SK-N-SH (cell line): ENCODE measurements at regions of chr3 and their contacts with region 1.

Region 1: GRCh38 chr3:140420621-140421357 is 257.1 kb upstream of the TRIM42 start:
- DNase-seq: no peak
- H3K4me3 ChIP-seq: no peak overlapping the region
- H3K27ac ChIP-seq: no peak overlapping the region
- H3K4me1 ChIP-seq: peaks cover 0 to 8% of the 10 kb centered on the region in 2 experiments; a peak in 2 of 4 replicates
- H3K27me3 ChIP-seq: no peaks in the 10 kb centered on the region
- CTCF ChIP-seq: no peak
- EP300 ChIP-seq: no peak
- RAD21 ChIP-seq: no peak

Region 2: GRCh38 chr3:140103166-140103565 is 317.6 kb before region 1 on chr3:
- CTCF ChIA-PET with region 1: no interaction called
- POLR2A ChIA-PET with region 1: no interaction called
- DNase-seq: no peak
- H3K4me3 ChIP-seq: no peak overlapping the region
- H3K27ac ChIP-seq: no peak overlapping the region
- H3K4me1 ChIP-seq: no peaks in the 10 kb centered on the region; a peak in 1 of 4 replicates
- H3K27me3 ChIP-seq: no peaks in the 10 kb centered on the region
- CTCF ChIP-seq: no peak
- EP300 ChIP-seq: no peak
- RAD21 ChIP-seq: no peak

Region 3: GRCh38 chr3:140432229-140432669 is 11.5 kb after region 1 on chr3:
- CTCF ChIA-PET with region 1: interaction called, 13 read pairs
- POLR2A ChIA-PET with region 1: no interaction called
- DNase-seq: peak; percentile 22
- H3K4me3 ChIP-seq: no peak overlapping the region
- H3K27ac ChIP-seq: peak overlapping the region in 1 of 2 experiments; percentile 22; a peak in 1 of 4 replicates
- H3K4me1 ChIP-seq: peaks cover 0 to 11% of the 10 kb centered on the region in 2 experiments; a peak in 2 of 4 replicates
- H3K27me3 ChIP-seq: no peaks in the 10 kb centered on the region
- CTCF ChIP-seq: no peak
- EP300 ChIP-seq: no peak
- RAD21 ChIP-seq: no peak

Region 4: DNA sequence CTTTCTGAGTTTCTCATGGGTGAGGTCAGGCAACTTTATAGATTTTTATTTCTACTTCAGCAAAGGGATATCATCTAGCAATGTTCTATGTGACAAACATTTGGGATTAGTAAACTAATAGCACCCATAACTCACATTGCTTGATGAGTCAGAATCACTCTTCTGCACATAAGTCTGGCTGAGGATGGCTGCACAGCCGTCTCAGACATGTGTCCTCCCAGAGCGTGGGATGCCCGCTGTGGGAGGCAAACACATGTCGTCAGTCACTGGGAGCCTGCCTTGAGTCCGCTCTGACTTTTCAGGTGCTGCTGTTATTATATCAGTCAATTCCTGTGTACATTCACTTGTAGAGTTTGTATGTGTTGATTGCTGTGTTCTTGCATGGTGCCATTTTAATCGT is 26.3 kb after region 1 on chr3:
- CTCF ChIA-PET with region 1: no interaction called
- POLR2A ChIA-PET with region 1: no interaction called
- DNase-seq: no peak
- H3K4me3 ChIP-seq: no peak overlapping the region
- H3K27ac ChIP-seq: no peak overlapping the region
- H3K4me1 ChIP-seq: no peaks in the 10 kb centered on the region
- H3K27me3 ChIP-seq: no peaks in the 10 kb centered on the region
- CTCF ChIP-seq: no peak
- EP300 ChIP-seq: no peak
- RAD21 ChIP-seq: no peak

Region 5: GRCh38 chr3:140528940-140529495 is 108.2 kb after region 1 on chr3:
- CTCF ChIA-PET with region 1: no interaction called
- POLR2A ChIA-PET with region 1: no interaction called
- DNase-seq: no peak
- H3K4me3 ChIP-seq: no peak overlapping the region
- H3K27ac ChIP-seq: no peak overlapping the region
- H3K4me1 ChIP-seq: no peaks in the 10 kb centered on the region
- H3K27me3 ChIP-seq: no peaks in the 10 kb centered on the region
- CTCF ChIP-seq: no peak
- EP300 ChIP-seq: no peak
- RAD21 ChIP-seq: no peak